ENCODE measurements at regions of chr10 and their contacts with region 1.

Region 1: GRCh38 chr10:32256613-32257437 is 90.1 kb downstream of the EPC1 start:
- DNase-seq: peak; percentile 79
- CTCF ChIP-seq: peak; percentile 90

Region 2: DNA sequence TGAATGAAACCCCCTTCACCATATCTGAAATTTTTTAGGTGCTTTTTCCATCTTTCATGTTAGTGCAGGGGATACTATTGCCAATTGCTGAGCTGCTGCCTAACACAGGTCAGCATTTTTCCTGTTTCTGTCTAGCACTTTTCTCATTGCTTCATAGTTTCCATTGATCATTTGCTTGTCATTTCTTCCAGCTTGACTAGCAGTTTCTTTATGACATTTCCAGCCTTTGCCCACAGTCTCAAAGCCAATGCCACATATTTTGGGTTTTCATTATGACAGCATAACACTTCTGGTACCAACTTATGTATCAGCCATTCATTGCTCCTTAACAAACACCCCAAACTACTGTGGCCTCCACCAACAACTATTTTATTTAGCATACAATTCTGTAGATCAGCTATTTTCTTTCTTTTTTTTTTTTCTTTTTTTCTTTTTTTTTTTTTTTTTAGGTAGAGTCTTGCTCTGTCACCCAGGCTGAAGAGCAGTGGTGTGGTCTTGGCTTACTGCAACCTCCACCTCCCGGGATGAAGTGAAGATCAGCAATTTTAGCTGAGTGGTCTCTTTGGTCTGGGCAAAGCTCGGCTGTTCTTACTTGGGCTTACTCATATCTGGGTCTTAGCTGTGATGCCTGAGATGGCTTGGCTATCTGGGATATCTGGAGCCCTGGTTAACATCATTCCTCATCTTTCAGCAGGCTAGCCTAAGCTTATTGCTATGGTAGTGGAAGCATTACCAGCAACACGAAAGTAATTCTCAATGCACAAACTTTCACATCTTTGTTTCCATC is 12.2 kb before region 1 on chr10:
- CTCF ChIA-PET with region 1: interaction called, 51 read pairs
- POLR2A ChIA-PET with region 1: no interaction called
- DNase-seq: peak; percentile 36
- CTCF ChIP-seq: no peak

Region 3: GRCh38 chr10:32298054-32298812 is 41.4 kb after region 1 on chr10:
- CTCF ChIA-PET with region 1: interaction called, 10 read pairs
- POLR2A ChIA-PET with region 1: no interaction called
- DNase-seq: no peak
- CTCF ChIP-seq: no peak

Region 4: GRCh38 chr10:32346134-32346550 is 89.3 kb after region 1 on chr10:
- CTCF ChIA-PET with region 1: interaction called, 19 read pairs
- POLR2A ChIA-PET with region 1: no interaction called
- DNase-seq: peak; percentile 94
- CTCF ChIP-seq: peak; percentile 86

Region 5: GRCh38 chr10:32367793-32368453 is 111.1 kb after region 1 on chr10:
- CTCF ChIA-PET with region 1: interaction called, 34 read pairs
- POLR2A ChIA-PET with region 1: no interaction called
- DNase-seq: peak; percentile 57
- CTCF ChIP-seq: peak; percentile 60

Region 6: GRCh38 chr10:32445036-32445435 is 188.2 kb after region 1 on chr10:
- CTCF ChIA-PET with region 1: no interaction called
- POLR2A ChIA-PET with region 1: no interaction called
- DNase-seq: no peak
- CTCF ChIP-seq: no peak

Measured in GM10248 (cell line).